CD4-positive, alpha-beta memory T cell (primary cell): ENCODE measurements at regions of chr3 and their contacts with region 1.

Region 1: GRCh38 chr3:16338999-16339398 is 74.0 kb downstream of the OXNAD1 start:
- DNase-seq: peak; percentile 22 to 60 (median 28)
- H3K4me3 ChIP-seq: no peak overlapping the region
- H3K4me3 Mint-ChIP-seq: peak overlapping the region in 4 of 8 donors; percentile 58 to 71 (median 62)
- H3K27ac ChIP-seq: peak overlapping the region; percentile 23
- H3K27ac Mint-ChIP-seq: peak overlapping the region; percentile 71 to 94 (median 86)
- H3K4me1 ChIP-seq: peaks cover 48% of the 10 kb centered on the region
- H3K4me1 Mint-ChIP-seq: peaks cover 44 to 81% (median 63%) of the 10 kb centered on the region in 4 donors
- H3K27me3 ChIP-seq: no peaks in the 10 kb centered on the region
- H3K27me3 Mint-ChIP-seq: no peaks in the 10 kb centered on the region

Region 2: GRCh38 chr3:16300881-16301359 is 38.1 kb before region 1 on chr3:
- CTCF ChIA-PET with region 1: interaction called, 6 read pairs
- POLR2A ChIA-PET with region 1: interaction called, 23 read pairs
- intact Hi-C with region 1: no loop called
- DNase-seq: peak; percentile 76 to 81 (median 77)
- H3K4me3 ChIP-seq: peak overlapping the region in 1 of 2 donors; percentile 50
- H3K4me3 Mint-ChIP-seq: peak overlapping the region; percentile 89 to 96 (median 90)
- H3K27ac ChIP-seq: peak overlapping the region; percentile 49
- H3K27ac Mint-ChIP-seq: peak overlapping the region; percentile 93 to 98 (median 96)
- H3K4me1 ChIP-seq: peaks cover 95% of the 10 kb centered on the region
- H3K4me1 Mint-ChIP-seq: peaks cover 81 to 99% (median 92%) of the 10 kb centered on the region in 4 donors
- H3K27me3 ChIP-seq: no peaks in the 10 kb centered on the region
- H3K27me3 Mint-ChIP-seq: no peaks in the 10 kb centered on the region

Region 3: GRCh38 chr3:16309558-16309957 is 29.4 kb before region 1 on chr3:
- CTCF ChIA-PET with region 1: interaction called, 3 read pairs
- POLR2A ChIA-PET with region 1: interaction called, 27 read pairs
- intact Hi-C with region 1: loop called (anchors 1 kb)
- DNase-seq: peak; percentile 59 to 88 (median 65)
- H3K4me3 ChIP-seq: no peak overlapping the region
- H3K4me3 Mint-ChIP-seq: peak overlapping the region; percentile 54 to 90 (median 80)
- H3K27ac ChIP-seq: peak overlapping the region; percentile 59
- H3K27ac Mint-ChIP-seq: peak overlapping the region; percentile 86 to 99 (median 89)
- H3K4me1 ChIP-seq: peaks cover 98% of the 10 kb centered on the region
- H3K4me1 Mint-ChIP-seq: peaks cover 79 to 95% (median 89%) of the 10 kb centered on the region in 4 donors
- H3K27me3 ChIP-seq: no peaks in the 10 kb centered on the region
- H3K27me3 Mint-ChIP-seq: no peaks in the 10 kb centered on the region

Region 4: GRCh38 chr3:18103591-18103990 is 1764.6 kb after region 1 on chr3:
- CTCF ChIA-PET with region 1: no interaction called
- POLR2A ChIA-PET with region 1: no interaction called
- intact Hi-C with region 1: no loop called
- DNase-seq: no peak
- H3K4me3 ChIP-seq: no peak overlapping the region
- H3K4me3 Mint-ChIP-seq: no peak overlapping the region
- H3K27ac ChIP-seq: no peak overlapping the region
- H3K27ac Mint-ChIP-seq: no peak overlapping the region
- H3K4me1 ChIP-seq: no peaks in the 10 kb centered on the region
- H3K4me1 Mint-ChIP-seq: no peaks in the 10 kb centered on the region
- H3K27me3 ChIP-seq: no peaks in the 10 kb centered on the region
- H3K27me3 Mint-ChIP-seq: peaks cover 14 to 29% of the 10 kb centered on the region in 2 donors